ENCODE measurements at regions of chr16 and their contacts with region 1.

Region 1: DNA sequence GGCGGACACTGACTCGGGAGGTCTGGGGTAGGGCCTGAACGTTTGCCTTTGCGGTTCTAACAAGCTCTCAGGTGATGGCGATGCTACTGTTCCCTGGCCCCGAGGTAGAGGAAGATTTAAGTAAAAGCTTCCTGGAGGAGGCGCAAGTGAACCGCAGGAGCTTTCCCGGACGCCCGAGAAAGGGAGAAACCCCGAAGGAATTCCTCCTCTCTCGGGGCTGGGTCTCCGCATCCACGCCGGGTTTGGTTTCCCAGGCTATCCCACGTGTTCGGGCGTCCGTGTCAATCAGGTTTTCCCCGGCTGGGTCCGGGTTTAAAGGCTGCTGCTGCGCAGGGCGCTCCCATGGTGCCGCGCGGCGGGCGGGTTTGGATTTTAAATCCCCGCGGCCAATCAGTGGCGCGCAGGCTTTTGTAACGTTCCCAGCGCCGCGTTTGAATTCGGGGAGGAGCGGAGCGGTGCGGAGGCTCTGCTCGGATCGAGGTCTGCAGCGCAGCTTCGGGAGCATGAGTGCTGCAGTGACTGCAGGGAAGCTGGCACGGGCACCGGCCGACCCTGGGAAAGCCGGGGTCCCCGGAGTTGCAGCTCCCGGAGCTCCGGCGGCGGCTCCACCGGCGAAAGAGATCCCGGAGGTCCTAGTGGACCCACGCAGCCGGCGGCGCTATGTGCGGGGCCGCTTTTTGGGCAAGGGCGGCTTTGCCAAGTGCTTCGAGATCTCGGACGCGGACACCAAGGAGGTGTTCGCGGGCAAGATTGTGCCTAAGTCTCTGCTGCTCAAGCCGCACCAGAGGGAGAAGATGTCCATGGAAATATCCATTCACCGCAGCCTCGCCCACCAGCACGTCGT is at the start of gene PLK1:
- DNase-seq: peak; percentile 90 to 92
- H3K4me3 ChIP-seq: peak within 1 kb of the TSS; percentile 83
- H3K4me3 Mint-ChIP-seq: peak within 1 kb of the TSS; percentile 99
- H3K27ac Mint-ChIP-seq: peak within 1 kb of the TSS; percentile 98
- H3K4me1 ChIP-seq: peaks cover 19% of the 10 kb centered on the region
- H3K4me1 Mint-ChIP-seq: peaks cover 5% of the 10 kb centered on the region
- H3K27me3 ChIP-seq: no peaks in the 10 kb centered on the region
- H3K27me3 Mint-ChIP-seq: no peaks in the 10 kb centered on the region
- CTCF ChIP-seq: peak in 1 of 2 experiments; percentile 31
- total RNA-seq, gene PLK1: 104 and 114 TPM in 2 replicates

Region 2: DNA sequence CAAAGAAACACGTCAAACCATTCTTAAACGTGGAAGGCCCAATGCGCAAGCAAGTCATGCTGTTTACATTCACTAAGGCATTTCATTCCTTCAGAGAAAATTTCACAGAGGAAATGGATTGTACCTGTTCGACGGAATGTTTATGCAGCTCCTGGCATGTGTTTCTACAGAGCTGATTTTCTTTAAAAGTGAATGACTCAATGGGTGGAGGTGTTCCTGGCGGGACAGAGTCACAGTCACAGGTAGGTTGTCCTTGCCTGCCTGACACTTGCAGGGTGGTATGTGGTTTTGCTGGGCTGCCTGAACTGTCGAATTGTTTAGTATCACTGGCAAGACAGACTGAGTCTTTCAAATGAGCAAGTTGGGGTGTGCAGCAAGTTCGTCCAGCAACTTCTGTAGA is 49.1 kb before region 1 on chr16:
- CTCF ChIA-PET with region 1: no interaction called
- POLR2A ChIA-PET with region 1: no interaction called
- intact Hi-C with region 1: no loop called
- DNase-seq: no peak
- H3K4me3 ChIP-seq: no peak overlapping the region
- H3K4me3 Mint-ChIP-seq: no peak overlapping the region
- H3K27ac Mint-ChIP-seq: no peak overlapping the region
- H3K4me1 ChIP-seq: no peaks in the 10 kb centered on the region
- H3K4me1 Mint-ChIP-seq: no peaks in the 10 kb centered on the region
- H3K27me3 ChIP-seq: no peaks in the 10 kb centered on the region
- H3K27me3 Mint-ChIP-seq: no peaks in the 10 kb centered on the region
- CTCF ChIP-seq: no peak

Region 3: DNA sequence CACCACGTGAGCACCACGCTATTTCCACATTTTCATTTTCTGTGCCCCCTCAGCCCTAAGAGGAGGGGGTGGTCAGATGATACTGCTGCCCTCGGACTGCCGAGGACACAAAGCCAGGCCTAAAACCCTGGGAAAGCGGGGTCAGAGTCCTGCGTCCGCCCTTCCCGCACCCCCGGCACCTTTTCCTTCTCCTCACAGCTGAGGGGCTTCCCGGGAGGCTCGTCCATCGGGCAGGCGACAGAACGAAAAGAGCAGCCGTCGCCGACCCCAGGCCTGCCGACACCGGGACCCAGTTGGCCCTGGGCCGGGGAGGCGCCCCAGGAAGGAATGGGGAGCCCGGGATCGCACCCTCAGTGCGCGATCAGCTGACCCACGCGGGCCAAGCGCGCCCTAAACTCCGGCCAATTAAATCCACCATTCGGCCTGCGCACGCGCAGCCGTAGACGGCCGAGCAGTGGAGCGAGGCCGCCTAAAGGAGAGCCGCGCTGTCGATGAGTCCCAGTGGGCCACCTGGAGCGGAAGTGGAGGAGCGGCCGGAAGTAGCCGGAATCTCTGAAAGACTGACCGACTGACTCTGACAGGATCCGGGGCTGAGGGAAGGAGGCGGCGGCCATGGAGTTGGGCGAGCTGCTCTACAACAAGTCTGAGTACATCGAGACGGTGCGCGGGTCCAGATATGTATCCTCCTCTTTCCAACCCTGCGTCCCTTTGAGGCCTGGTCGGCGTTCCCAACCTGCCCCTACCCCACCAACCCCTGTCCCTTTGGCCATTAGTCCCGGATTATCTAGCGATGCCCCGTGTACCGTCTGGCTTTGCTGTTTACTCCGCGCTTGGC is 37.5 kb before region 1 on chr16 and contains the starts of genes DCTN5 and PALB2:
- CTCF ChIA-PET with region 1: no interaction called
- POLR2A ChIA-PET with region 1: no interaction called
- intact Hi-C with region 1: loop called (anchors 5 kb)
- DNase-seq: peak; percentile 90 to 93
- H3K4me3 ChIP-seq: peak within 1 kb of the TSS; percentile 99
- H3K4me3 Mint-ChIP-seq: peak within 1 kb of the TSS; percentile 96
- H3K27ac Mint-ChIP-seq: peak within 1 kb of the TSS; percentile 93
- H3K4me1 ChIP-seq: no peaks in the 10 kb centered on the region
- H3K4me1 Mint-ChIP-seq: peaks cover 7% of the 10 kb centered on the region
- H3K27me3 ChIP-seq: no peaks in the 10 kb centered on the region
- H3K27me3 Mint-ChIP-seq: no peaks in the 10 kb centered on the region
- CTCF ChIP-seq: no peak
- total RNA-seq, gene DCTN5: 91.0 and 101 TPM in 2 replicates
- total RNA-seq, gene PALB2: 19.4 and 20.5 TPM in 2 replicates

Region 4: DNA sequence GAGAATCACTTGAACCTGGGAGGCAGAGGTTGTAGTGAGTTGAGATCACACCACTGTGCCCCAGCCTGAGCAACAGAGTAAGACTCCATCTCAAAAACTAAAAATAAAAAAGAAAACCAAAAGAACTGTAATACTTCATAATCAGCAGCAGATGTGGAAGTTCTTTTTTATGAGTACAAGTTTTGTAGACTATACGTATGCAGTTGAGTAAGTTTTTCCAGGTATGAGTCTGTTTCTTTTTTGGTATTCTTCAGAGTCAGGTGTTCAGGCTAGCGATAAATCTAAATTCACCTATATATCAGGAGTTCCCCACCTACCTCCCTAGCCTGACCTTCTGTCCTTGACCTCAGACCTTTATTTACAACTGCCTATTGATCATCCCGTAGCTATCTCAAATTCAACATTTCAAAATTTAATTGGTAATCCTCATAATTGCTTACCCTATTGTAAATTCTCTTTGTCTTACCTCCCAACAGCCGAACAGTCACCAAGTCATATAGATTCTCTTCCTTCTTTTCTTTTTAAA is 26.6 kb before region 1 on chr16:
- CTCF ChIA-PET with region 1: no interaction called
- POLR2A ChIA-PET with region 1: no interaction called
- intact Hi-C with region 1: no loop called
- DNase-seq: no peak
- H3K4me3 ChIP-seq: no peak overlapping the region
- H3K4me3 Mint-ChIP-seq: no peak overlapping the region
- H3K27ac Mint-ChIP-seq: no peak overlapping the region
- H3K4me1 ChIP-seq: no peaks in the 10 kb centered on the region
- H3K4me1 Mint-ChIP-seq: no peaks in the 10 kb centered on the region
- H3K27me3 ChIP-seq: no peaks in the 10 kb centered on the region
- H3K27me3 Mint-ChIP-seq: no peaks in the 10 kb centered on the region
- CTCF ChIP-seq: no peak

Region 5: GRCh38 chr16:23823475-23824384 is 145.1 kb after region 1 on chr16:
- CTCF ChIA-PET with region 1: no interaction called
- POLR2A ChIA-PET with region 1: no interaction called
- intact Hi-C with region 1: no loop called
- DNase-seq: no peak
- H3K4me3 ChIP-seq: no peak overlapping the region
- H3K4me3 Mint-ChIP-seq: no peak overlapping the region
- H3K27ac Mint-ChIP-seq: no peak overlapping the region
- H3K4me1 ChIP-seq: no peaks in the 10 kb centered on the region
- H3K4me1 Mint-ChIP-seq: no peaks in the 10 kb centered on the region
- H3K27me3 ChIP-seq: no peaks in the 10 kb centered on the region
- H3K27me3 Mint-ChIP-seq: peaks cover 3% of the 10 kb centered on the region
- CTCF ChIP-seq: no peak

Region 6: GRCh38 chr16:24539291-24539849 is 860.7 kb after region 1 on chr16 and contains the start of gene RBBP6:
- CTCF ChIA-PET with region 1: no interaction called
- POLR2A ChIA-PET with region 1: no interaction called
- intact Hi-C with region 1: loop called (anchors 5 kb)
- DNase-seq: peak; percentile 90 to 95
- H3K4me3 ChIP-seq: peak within 1 kb of the TSS; percentile 94
- H3K4me3 Mint-ChIP-seq: peak within 1 kb of the TSS; percentile 98
- H3K27ac Mint-ChIP-seq: peak within 1 kb of the TSS; percentile 100
- H3K4me1 ChIP-seq: peaks cover 6% of the 10 kb centered on the region; the same call in 1 of the 2 replicates
- H3K4me1 Mint-ChIP-seq: peaks cover 8% of the 10 kb centered on the region
- H3K27me3 ChIP-seq: no peaks in the 10 kb centered on the region
- H3K27me3 Mint-ChIP-seq: no peaks in the 10 kb centered on the region
- CTCF ChIP-seq: peak in 1 of 2 experiments; percentile 25
- total RNA-seq, gene RBBP6: 38.7 and 42.2 TPM in 2 replicates

Measured in Caco-2 (cell line).